ENCODE measurements at regions of chr2 and their contacts with region 1.

Region 1: GRCh38 chr2:215917953-215918620 is 95.3 kb downstream of the MREG start:
- DNase-seq: no peak
- H3K4me3 ChIP-seq: no peak overlapping the region
- H3K27ac ChIP-seq: peak overlapping the region; percentile 43 to 75 (median 64)
- H3K4me1 ChIP-seq: peaks cover 0 to 34% (median 29%) of the 10 kb centered on the region in 4 donors
- H3K27me3 ChIP-seq: no peaks in the 10 kb centered on the region
- CTCF ChIP-seq: no peak
- EP300 ChIP-seq: no peak
- POLR2A ChIP-seq: no peak

Region 2: GRCh38 chr2:215435809-215436704 is 482.0 kb before region 1 on chr2 and contains the start of gene FN1:
- intact Hi-C with region 1: loop called (anchors 2 kb)
- DNase-seq: peak; percentile 98
- H3K4me3 ChIP-seq: peak within 1 kb of the TSS; percentile 87 to 97 (median 90)
- H3K27ac ChIP-seq: peak within 1 kb of the TSS; percentile 95 to 99 (median 98)
- H3K4me1 ChIP-seq: peaks cover 0 to 42% (median 21%) of the 10 kb centered on the region in 4 donors
- H3K27me3 ChIP-seq: no peaks in the 10 kb centered on the region
- CTCF ChIP-seq: no peak
- EP300 ChIP-seq: peak in 2 of 4 donors; percentile 42 to 58
- POLR2A ChIP-seq: peak; percentile 79 to 85
- total RNA-seq, gene FN1: 671 to 3,059 (median 1,333) TPM

Region 3: DNA sequence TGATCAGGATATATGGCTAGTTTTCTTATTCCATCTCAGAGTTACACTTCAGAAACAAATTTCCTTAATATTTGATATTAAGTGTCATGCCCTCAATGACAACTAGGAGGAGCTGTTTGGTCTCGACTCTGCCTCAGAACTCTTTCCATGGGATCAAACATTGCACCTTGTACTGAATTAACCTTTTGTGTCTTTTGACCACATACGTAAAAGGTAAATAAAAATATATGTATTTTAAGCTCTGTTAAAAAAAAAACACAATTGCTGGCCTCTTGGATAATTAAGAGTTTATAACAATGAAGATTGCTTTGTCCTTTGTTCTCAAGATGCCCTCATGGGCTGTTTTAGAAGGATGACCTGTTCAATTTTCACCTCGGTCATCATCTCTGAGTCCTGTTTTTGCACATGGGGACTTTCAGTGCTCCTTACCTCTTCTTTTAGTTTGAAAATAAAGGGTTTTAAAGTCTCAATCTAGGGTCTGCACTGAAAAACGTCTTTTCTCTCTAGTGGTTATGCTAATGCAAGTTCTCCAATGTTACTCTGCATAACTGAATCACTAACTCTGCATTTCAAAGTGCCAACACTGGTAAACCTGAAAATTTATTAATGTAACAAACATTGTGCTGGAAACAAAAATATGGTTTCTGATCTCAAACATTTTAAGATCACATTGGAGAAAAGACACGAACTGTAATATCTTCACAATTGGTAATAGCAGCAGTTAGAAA is 463.4 kb before region 1 on chr2:
- intact Hi-C with region 1: loop called (anchors 5 kb)
- DNase-seq: no peak
- H3K4me3 ChIP-seq: no peak overlapping the region
- H3K27ac ChIP-seq: no peak overlapping the region
- H3K4me1 ChIP-seq: no peaks in the 10 kb centered on the region
- H3K27me3 ChIP-seq: no peaks in the 10 kb centered on the region
- CTCF ChIP-seq: peak; percentile 30 to 73 (median 66)
- EP300 ChIP-seq: no peak
- POLR2A ChIP-seq: no peak

Region 4: GRCh38 chr2:215711471-215712034 is 206.5 kb before region 1 on chr2:
- intact Hi-C with region 1: loop called (anchors 5 kb)
- DNase-seq: no peak
- H3K4me3 ChIP-seq: no peak overlapping the region
- H3K27ac ChIP-seq: peak overlapping the region; percentile 66 to 81 (median 76)
- H3K4me1 ChIP-seq: peaks cover 0 to 41% (median 35%) of the 10 kb centered on the region in 4 donors
- H3K27me3 ChIP-seq: no peaks in the 10 kb centered on the region
- CTCF ChIP-seq: no peak
- EP300 ChIP-seq: no peak
- POLR2A ChIP-seq: no peak

Region 5: DNA sequence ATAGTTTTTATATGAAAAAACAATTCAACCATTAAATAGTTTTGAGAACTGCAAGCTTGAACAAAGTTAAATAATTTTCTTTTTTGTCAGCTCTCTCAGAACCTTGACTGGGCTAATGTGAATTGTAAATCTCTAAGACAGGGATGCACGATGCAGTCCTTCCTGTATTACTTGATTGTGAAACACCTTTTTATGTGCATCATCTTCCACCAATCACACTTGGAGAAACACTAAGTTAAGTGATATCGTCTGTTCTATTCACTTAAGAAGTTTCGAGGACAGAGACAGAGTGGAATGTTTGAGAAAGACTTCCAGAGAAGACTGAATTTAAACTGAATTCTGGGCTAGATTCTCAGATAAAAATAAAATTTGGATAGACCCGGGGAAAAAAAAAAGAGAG is 143.0 kb before region 1 on chr2:
- intact Hi-C with region 1: loop called (anchors 5 kb)
- DNase-seq: no peak
- H3K4me3 ChIP-seq: no peak overlapping the region
- H3K27ac ChIP-seq: peak overlapping the region in 1 of 4 donors; percentile 70
- H3K4me1 ChIP-seq: peaks cover 0 to 57% (median 44%) of the 10 kb centered on the region in 4 donors
- H3K27me3 ChIP-seq: no peaks in the 10 kb centered on the region
- CTCF ChIP-seq: no peak
- EP300 ChIP-seq: no peak
- POLR2A ChIP-seq: no peak

Region 6: DNA sequence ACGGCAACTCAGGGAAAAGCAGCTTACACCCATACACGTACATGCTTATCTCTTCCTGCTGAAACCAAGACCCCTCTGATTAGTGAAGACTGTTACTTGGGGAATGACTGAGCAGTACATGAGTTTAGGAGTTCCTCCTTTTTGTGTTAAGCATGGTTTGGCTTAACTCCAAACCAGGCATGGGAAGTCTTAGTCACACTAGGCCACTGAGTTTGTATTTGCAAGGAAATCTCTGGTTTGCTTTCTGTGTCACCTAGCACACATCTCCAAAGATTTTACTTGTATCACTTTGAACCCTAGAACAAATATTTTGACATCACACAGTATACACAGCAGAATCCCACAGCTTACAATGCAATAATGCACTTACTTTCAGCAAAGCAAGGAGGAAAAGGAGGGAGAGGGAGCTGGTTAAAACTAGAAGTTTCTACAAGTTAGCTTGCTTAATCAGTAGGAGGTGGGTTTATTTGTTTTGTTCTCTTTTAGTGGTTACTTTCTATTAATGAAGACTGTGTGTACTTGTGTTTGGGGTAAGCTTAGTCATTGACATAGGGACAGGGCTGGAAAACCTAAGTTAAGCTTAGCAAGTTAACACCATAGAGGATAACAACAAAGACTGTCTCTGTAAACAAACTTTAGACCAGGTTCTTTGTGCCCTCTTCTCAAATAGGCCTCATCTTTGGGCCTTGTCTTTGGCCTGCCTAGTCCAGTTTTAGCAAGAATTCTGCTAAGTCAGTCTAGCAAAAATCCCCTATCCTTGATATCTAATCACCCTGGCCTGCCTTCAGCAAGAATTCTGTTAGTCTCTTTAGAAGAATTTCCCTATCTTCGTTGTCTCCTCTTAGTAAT is 124.1 kb before region 1 on chr2:
- intact Hi-C with region 1: no loop called
- DNase-seq: no peak
- H3K4me3 ChIP-seq: no peak overlapping the region
- H3K27ac ChIP-seq: peak overlapping the region; percentile 48 to 72 (median 62)
- H3K4me1 ChIP-seq: peaks cover 0 to 42% (median 27%) of the 10 kb centered on the region in 4 donors
- H3K27me3 ChIP-seq: no peaks in the 10 kb centered on the region
- CTCF ChIP-seq: no peak
- EP300 ChIP-seq: no peak
- POLR2A ChIP-seq: no peak

Region 7: DNA sequence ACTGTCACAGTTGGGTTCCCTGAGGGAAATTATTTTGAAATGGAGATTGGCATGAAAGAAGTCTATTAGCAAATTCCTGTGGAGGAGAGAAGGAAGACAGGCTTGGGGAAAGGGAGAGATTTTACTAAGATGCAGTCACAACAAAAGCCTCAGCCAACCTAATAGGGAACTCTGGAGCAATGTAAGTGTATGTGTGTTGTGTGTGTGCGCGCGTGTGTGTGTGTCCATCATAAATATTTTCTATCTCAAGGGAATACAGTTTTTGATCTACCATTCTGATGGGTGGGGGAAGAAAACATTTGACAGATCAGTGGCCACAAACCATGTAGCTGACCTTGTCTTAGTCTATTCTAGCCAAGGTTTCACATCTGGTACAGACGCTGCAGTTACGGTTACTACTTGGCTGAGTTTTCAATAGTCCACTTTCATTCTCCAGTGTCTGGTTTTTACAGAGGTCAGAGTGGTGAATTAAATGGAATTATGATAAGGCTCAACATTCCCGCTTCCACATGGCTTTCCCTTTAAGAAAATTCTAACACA is 22.6 kb after region 1 on chr2:
- intact Hi-C with region 1: no loop called
- DNase-seq: no peak
- H3K4me3 ChIP-seq: no peak overlapping the region
- H3K27ac ChIP-seq: no peak overlapping the region
- H3K4me1 ChIP-seq: no peaks in the 10 kb centered on the region
- H3K27me3 ChIP-seq: no peaks in the 10 kb centered on the region
- CTCF ChIP-seq: no peak
- EP300 ChIP-seq: no peak
- POLR2A ChIP-seq: no peak

Measured in sigmoid colon (tissue), 7 donors.